WTC11 (cell line): ENCODE measurements at regions of chr12 and their contacts with region 1.

Region 1: DNA sequence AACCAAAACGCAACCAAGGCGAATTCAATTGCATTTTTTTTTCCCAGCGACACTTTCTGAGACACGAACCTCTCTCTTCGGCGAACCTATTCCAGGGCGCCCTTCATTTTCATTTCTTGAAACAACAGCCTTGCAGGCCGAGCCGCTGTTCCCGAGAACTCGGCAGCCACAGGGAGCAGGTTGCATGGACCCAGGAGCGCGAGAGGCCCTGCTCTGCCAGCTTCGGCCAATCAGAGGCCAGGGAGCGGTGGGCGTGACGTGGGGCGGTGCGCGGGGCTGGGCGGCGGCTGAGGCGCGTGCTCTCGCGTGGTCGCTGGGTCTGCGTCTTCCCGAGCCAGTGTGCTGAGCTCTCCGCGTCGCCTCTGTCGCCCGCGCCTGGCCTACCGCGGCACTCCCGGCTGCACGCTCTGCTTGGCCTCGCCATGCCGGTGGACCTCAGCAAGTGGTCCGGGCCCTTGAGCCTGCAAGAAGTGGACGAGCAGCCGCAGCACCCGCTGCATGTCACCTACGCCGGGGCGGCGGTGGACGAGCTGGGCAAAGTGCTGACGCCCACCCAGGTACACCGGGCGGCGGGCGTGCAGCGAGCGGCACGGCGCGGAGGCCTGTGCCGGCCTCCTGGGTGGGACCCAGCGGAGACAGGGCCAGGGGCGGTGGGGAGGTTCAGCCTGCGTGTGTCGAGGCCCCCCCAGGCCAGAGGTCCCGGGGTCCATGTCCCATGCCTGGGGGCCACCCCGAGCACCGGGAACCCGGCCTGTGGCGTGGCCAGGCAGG is at the start of gene PEBP1:
- DNase-seq: peak; percentile 87
- ATAC-seq: peak; percentile 95
- H3K4me3 Mint-ChIP-seq: peak within 1 kb of the TSS; percentile 89
- H3K27ac Mint-ChIP-seq: peak within 1 kb of the TSS; percentile 97
- H3K4me1 Mint-ChIP-seq: peaks cover 16% of the 10 kb centered on the region
- H3K27me3 Mint-ChIP-seq: no peaks in the 10 kb centered on the region
- CTCF ChIP-seq: no peak
- total RNA-seq, gene PEBP1: 347 to 366 TPM (median 363 TPM) in 3 replicates

Region 2: GRCh38 chr12:117936722-117937484 is 199.1 kb before region 1 on chr12:
- CTCF ChIA-PET with region 1: no interaction called
- POLR2A ChIA-PET with region 1: no interaction called
- DNase-seq: no peak
- ATAC-seq: no peak
- H3K4me3 Mint-ChIP-seq: no peak overlapping the region
- H3K27ac Mint-ChIP-seq: no peak overlapping the region
- H3K4me1 Mint-ChIP-seq: no peaks in the 10 kb centered on the region
- H3K27me3 Mint-ChIP-seq: no peaks in the 10 kb centered on the region
- CTCF ChIP-seq: no peak

Region 3: GRCh38 chr12:118103604-118104382 is 32.2 kb before region 1 on chr12 and contains the start of gene VSIG10:
- CTCF ChIA-PET with region 1: no interaction called
- POLR2A ChIA-PET with region 1: interaction called, 12 read pairs
- DNase-seq: peak; percentile 68
- ATAC-seq: peak; percentile 75
- H3K4me3 Mint-ChIP-seq: peak within 1 kb of the TSS; percentile 95
- H3K27ac Mint-ChIP-seq: peak within 1 kb of the TSS; percentile 97
- H3K4me1 Mint-ChIP-seq: peaks cover 39% of the 10 kb centered on the region
- H3K27me3 Mint-ChIP-seq: no peaks in the 10 kb centered on the region
- CTCF ChIP-seq: no peak
- total RNA-seq, gene VSIG10: 69.7 to 82.5 TPM (median 74.4 TPM) in 3 replicates

Region 4: DNA sequence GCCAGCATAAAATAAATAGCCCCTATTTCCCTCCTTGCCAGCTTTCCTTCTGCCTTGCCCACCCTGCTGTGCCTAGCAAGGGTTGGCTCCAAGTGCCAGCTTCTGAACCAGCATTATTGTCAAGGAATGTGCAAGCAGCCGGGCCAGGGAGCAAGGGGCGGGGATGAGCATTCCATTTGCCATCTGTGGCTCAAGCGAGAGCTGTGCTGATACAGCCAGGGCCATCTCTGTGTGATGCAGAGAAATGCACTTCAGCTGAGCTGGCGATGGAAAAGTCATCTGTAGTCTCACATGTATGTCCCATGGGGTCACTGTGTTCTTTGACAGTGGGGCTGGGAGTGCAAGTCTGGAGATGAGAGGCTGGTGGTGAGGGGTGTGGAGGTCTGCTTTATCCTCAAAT is 377.6 kb after region 1 on chr12:
- CTCF ChIA-PET with region 1: no interaction called
- POLR2A ChIA-PET with region 1: interaction called, 10 read pairs
- DNase-seq: no peak
- ATAC-seq: no peak
- H3K4me3 Mint-ChIP-seq: no peak overlapping the region
- H3K27ac Mint-ChIP-seq: no peak overlapping the region
- H3K4me1 Mint-ChIP-seq: peaks cover 12% of the 10 kb centered on the region
- H3K27me3 Mint-ChIP-seq: no peaks in the 10 kb centered on the region
- CTCF ChIP-seq: no peak